ENCODE measurements at regions of chr10 and their contacts with region 1.

Region 1: GRCh38 chr10:17188644-17189172 is 12.8 kb downstream of the TRDMT1 start:
- DNase-seq: no peak
- H3K4me3 ChIP-seq: no peak overlapping the region
- H3K27ac ChIP-seq: no peak overlapping the region
- H3K4me1 ChIP-seq: no peaks in the 10 kb centered on the region
- H3K27me3 ChIP-seq: no peaks in the 10 kb centered on the region
- CTCF ChIP-seq: no peak
- POLR2A ChIP-seq: no peak

Region 2: DNA sequence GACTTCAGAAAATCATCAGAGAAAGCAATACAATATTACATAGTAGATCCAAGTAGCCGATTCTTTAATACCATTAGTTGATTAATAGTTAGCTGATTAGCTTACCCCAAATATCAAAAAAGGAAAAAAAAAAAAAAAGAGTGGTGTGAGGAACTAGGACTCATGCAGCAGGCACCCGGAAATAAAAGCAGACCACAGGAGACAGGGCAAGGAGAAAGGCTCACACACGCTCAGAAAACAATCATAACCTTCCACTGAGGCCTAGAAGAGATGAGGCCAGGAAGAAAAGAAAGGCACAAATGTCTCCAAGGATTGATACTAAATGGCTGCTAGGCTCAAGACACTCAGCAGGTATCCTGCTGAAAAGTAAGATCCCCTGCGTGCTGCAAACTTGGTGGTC is 13.2 kb before region 1 on chr10:
- CTCF ChIA-PET with region 1: no interaction called
- POLR2A ChIA-PET with region 1: interaction called, 3 read pairs
- dilution Hi-C with region 1: no loop called
- intact Hi-C with region 1: loop called (anchors 2 kb)
- DNase-seq: peak; percentile 17
- H3K4me3 ChIP-seq: no peak overlapping the region
- H3K27ac ChIP-seq: no peak overlapping the region
- H3K4me1 ChIP-seq: no peaks in the 10 kb centered on the region
- H3K27me3 ChIP-seq: no peaks in the 10 kb centered on the region
- CTCF ChIP-seq: no peak
- POLR2A ChIP-seq: no peak

Region 3: DNA sequence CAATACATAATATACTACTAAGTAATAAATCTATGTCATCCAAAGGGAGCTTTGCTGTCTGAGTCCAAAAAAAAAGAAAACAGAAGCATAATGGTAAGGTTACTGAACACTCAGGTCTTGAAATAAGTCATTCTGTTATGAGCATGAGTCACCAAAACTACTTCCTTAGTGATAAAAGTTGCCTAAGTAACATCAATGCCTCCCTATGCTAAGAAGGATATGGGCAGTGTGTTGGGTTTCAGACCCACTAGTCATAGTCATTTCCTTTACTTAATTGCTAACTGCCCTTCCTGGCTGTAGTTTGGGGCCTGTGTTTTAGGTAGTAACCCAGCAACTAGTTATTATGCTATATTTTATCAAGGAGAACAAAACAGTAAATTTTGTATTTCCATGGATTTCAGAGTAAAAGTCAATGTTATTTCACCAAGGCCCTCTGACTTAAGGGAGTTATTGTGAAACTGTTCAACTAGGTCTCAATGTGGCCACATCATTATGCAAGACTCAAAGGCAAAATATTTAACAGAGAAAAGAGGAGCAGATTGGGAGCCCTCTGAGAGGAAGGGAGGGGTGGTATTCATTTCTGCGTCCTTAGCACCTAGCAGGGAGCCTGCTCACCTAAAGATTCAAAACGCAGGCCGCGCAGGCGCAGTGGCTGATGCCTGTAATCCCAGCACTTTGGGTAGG is 27.7 kb after region 1 on chr10:
- CTCF ChIA-PET with region 1: no interaction called
- POLR2A ChIA-PET with region 1: no interaction called
- dilution Hi-C with region 1: no loop called
- intact Hi-C with region 1: no loop called
- DNase-seq: peak; percentile 98
- H3K4me3 ChIP-seq: peak overlapping the region in 1 of 3 experiments; percentile 3
- H3K27ac ChIP-seq: peak overlapping the region; percentile 99
- H3K4me1 ChIP-seq: peaks cover 33% of the 10 kb centered on the region
- H3K27me3 ChIP-seq: no peaks in the 10 kb centered on the region
- CTCF ChIP-seq: no peak
- POLR2A ChIP-seq: peak; percentile 77

Region 4: GRCh38 chr10:17228091-17228940 is 39.6 kb after region 1 on chr10 and contains the start of gene VIM:
- CTCF ChIA-PET with region 1: no interaction called
- POLR2A ChIA-PET with region 1: no interaction called
- dilution Hi-C with region 1: no loop called
- intact Hi-C with region 1: no loop called
- DNase-seq: peak; percentile 97
- H3K4me3 ChIP-seq: peak within 1 kb of the TSS; percentile 66 to 87 (median 83)
- H3K27ac ChIP-seq: peak within 1 kb of the TSS; percentile 99
- H3K4me1 ChIP-seq: peaks cover 24% of the 10 kb centered on the region
- H3K27me3 ChIP-seq: no peaks in the 10 kb centered on the region
- CTCF ChIP-seq: peak in 1 of 2 donors; percentile 16
- POLR2A ChIP-seq: peak; percentile 92
- total RNA-seq, gene VIM: 5,754 and 5,781 TPM in 2 replicates